WTC11 (cell line): ENCODE measurements at regions of chr12 and their contacts with region 1.

Region 1: GRCh38 chr12:53098982-53099651 is 1.6 kb downstream of the IGFBP6 start:
- DNase-seq: peak; percentile 92
- ATAC-seq: peak; percentile 16
- H3K4me3 Mint-ChIP-seq: peak overlapping the region; percentile 90
- H3K27ac Mint-ChIP-seq: no peak overlapping the region
- H3K4me1 Mint-ChIP-seq: peaks cover 30% of the 10 kb centered on the region
- H3K27me3 Mint-ChIP-seq: peaks cover 54% of the 10 kb centered on the region
- CTCF ChIP-seq: peak; percentile 96

Region 2: DNA sequence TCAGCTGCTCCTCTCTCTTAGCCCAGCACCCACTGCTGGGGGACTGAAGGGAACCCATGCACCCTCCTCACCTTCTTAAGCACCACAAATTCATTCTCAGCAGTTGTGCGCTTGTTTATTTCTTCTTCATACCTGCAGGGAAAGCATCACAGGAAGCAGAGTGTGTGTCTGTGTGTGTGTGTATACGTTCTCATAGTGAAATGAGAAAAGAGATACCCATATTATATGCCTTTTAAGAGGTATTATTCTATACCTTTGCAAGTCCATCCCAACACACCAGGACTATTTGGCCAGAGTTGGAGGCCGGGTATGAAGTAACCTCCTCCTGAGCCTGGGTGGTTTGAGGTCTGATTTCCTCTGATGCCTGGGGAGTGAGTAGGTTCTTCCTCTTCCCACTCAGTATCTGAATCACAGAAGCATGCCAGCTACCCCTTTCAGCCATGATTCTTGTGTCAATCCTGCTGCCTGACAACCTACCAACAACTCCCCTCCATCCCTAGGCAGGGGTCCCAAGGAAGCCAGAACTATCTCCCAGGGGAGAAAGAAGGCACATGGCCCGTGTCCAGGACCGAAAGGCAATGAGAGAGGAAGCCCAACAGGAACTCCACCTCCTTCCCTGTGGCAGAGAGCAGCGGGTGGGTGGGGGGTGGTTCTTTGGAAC is 483.8 kb before region 1 on chr12:
- CTCF ChIA-PET with region 1: no interaction called
- POLR2A ChIA-PET with region 1: no interaction called
- DNase-seq: no peak
- ATAC-seq: no peak
- H3K4me3 Mint-ChIP-seq: no peak overlapping the region
- H3K27ac Mint-ChIP-seq: no peak overlapping the region
- H3K4me1 Mint-ChIP-seq: peaks cover 4% of the 10 kb centered on the region; the same call in 1 of the 2 replicates
- H3K27me3 Mint-ChIP-seq: peaks cover 3% of the 10 kb centered on the region; the same call in 1 of the 2 replicates
- CTCF ChIP-seq: no peak

Region 3: GRCh38 chr12:53047221-53048042 is 51.7 kb before region 1 on chr12:
- CTCF ChIA-PET with region 1: interaction called, 52 read pairs
- POLR2A ChIA-PET with region 1: interaction called, 4 read pairs
- DNase-seq: peak; percentile 81
- ATAC-seq: peak; percentile 27
- H3K4me3 Mint-ChIP-seq: peak overlapping the region; percentile 62
- H3K27ac Mint-ChIP-seq: no peak overlapping the region
- H3K4me1 Mint-ChIP-seq: peaks cover 80% of the 10 kb centered on the region
- H3K27me3 Mint-ChIP-seq: peaks cover 40% of the 10 kb centered on the region
- CTCF ChIP-seq: peak; percentile 41; the same call in 1 of the 2 replicates

Region 4: DNA sequence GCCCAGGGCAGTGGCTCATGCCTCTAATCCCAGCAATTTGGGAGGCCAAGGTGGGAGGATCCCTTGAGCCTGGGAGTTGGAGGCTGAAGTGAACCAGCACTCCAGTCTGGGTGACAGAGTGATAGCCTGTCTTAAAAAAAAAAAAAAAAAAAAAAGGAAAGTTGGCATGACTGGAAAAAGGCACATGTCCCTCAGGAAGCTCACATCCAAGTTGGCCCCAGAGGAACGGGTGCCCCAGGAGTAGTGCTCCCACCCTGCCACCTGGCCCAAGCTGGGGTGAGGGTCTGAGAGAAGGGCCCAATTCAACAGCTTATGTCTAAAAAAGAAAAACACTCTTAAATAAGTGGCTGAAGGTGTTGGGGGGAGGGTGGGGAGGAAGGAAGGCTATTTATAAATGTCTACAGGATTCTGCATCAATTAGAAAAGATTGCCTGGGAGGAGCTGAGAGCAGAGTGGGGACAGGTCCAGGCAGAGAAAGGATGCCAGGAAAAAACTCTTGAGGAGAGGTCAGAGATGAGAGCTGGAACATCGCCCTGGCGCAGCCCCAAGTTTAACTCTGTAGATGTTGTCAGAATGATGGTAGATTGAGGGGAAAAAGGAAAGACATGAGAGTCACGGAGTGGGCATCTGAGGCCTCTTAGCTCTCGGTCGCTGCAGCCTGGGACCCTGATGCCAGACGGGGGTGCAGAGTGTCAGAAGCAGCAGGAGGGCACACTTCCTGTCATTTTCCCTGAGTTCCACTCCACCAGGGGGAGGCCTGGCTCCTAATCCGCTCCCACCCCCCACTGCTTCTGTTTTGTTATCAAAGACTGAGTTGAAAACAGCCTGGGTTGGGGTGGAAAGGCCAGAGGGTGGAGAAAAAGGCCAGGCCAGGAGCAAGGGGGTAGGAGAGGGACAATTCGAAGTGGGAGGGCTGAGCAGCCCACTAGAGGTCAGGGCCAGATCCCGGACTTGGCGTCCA is 27.2 kb before region 1 on chr12:
- CTCF ChIA-PET with region 1: interaction called, 474 read pairs
- POLR2A ChIA-PET with region 1: no interaction called
- DNase-seq: no peak
- ATAC-seq: no peak
- H3K4me3 Mint-ChIP-seq: no peak overlapping the region
- H3K27ac Mint-ChIP-seq: no peak overlapping the region
- H3K4me1 Mint-ChIP-seq: peaks cover 28% of the 10 kb centered on the region
- H3K27me3 Mint-ChIP-seq: no peaks in the 10 kb centered on the region; the same call in none of the 2 replicates
- CTCF ChIP-seq: no peak

Region 5: GRCh38 chr12:53079226-53080117 is 19.6 kb before region 1 on chr12 and contains the start of gene SPRYD3:
- CTCF ChIA-PET with region 1: interaction called, 76 read pairs
- POLR2A ChIA-PET with region 1: interaction called, 5 read pairs
- DNase-seq: peak; percentile 98
- ATAC-seq: peak; percentile 95
- H3K4me3 Mint-ChIP-seq: peak within 1 kb of the TSS; percentile 85
- H3K27ac Mint-ChIP-seq: peak within 1 kb of the TSS; percentile 95
- H3K4me1 Mint-ChIP-seq: peaks cover 13% of the 10 kb centered on the region
- H3K27me3 Mint-ChIP-seq: peaks cover 43% of the 10 kb centered on the region
- CTCF ChIP-seq: no peak
- total RNA-seq, gene SPRYD3: 6.5 to 11.9 TPM (median 6.8 TPM) in 3 replicates

Region 6: GRCh38 chr12:53086361-53086760 is 12.8 kb before region 1 on chr12:
- CTCF ChIA-PET with region 1: interaction called, 14 read pairs
- POLR2A ChIA-PET with region 1: interaction called, 5 read pairs
- DNase-seq: no peak
- ATAC-seq: no peak
- H3K4me3 Mint-ChIP-seq: no peak overlapping the region
- H3K27ac Mint-ChIP-seq: no peak overlapping the region
- H3K4me1 Mint-ChIP-seq: no peaks in the 10 kb centered on the region; the same call in 1 of the 2 replicates
- H3K27me3 Mint-ChIP-seq: peaks cover 82% of the 10 kb centered on the region
- CTCF ChIP-seq: no peak

Region 7: DNA sequence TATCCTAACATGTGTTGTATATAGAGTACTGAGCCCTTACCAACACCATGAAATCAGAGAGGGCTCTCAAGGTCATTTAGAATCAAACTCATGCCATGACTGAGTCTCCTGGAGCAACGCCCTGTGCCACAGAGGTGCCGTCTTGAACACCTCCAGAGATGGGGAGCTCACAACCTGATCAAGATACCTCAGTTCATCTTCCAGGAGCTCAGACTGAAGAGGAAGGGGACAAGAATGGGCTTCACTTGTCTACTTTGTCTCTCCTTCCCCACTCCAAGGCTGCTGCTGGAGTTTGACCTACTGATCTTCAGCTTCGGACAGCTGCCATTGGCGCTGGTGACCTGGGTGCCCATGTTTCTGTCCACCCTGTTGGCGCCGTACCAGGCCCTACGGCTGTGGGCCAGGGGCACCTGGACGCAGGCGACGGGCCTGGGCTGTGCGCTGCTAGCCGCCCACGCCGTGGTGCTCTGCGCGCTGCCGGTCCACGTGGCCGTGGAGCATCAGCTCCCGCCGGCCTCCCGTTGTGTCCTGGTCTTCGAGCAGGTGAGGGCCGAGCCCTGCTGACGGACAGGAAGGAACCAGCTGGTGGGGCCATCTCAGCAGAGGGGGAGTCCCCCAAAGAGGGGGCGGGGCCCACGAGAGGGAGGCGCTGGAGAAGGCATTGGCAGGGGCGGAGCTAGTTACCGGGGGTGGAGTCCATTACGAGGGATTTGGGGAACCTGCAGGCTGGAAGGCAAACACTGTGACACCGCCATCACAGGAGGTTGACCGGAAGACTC is 16.2 kb after region 1 on chr12:
- CTCF ChIA-PET with region 1: interaction called, 24 read pairs
- POLR2A ChIA-PET with region 1: no interaction called
- DNase-seq: peak; percentile 92
- ATAC-seq: peak; percentile 98
- H3K4me3 Mint-ChIP-seq: no peak overlapping the region
- H3K27ac Mint-ChIP-seq: no peak overlapping the region
- H3K4me1 Mint-ChIP-seq: 0 out of 2 replicates have a peak, but pooled peaks cover 2% of the 10 kb centered on the region
- H3K27me3 Mint-ChIP-seq: peaks cover 32% of the 10 kb centered on the region
- CTCF ChIP-seq: no peak